Sciatic nerve (tissue), 2 donors: ENCODE measurements at regions of chr7 and their contacts with region 1.

Region 1: GRCh38 chr7:135170274-135170997 is at the start of gene CYREN:
- DNase-seq: peak; percentile 97
- ATAC-seq: peak; percentile 98
- total RNA-seq, gene CYREN: 39.8 TPM

Region 2: GRCh38 chr7:134992626-134993179 is 177.7 kb before region 1 on chr7:
- intact Hi-C with region 1: loop called (anchors 10 kb)
- DNase-seq: no peak
- ATAC-seq: peak; percentile 49

Region 3: GRCh38 chr7:135193615-135194081 is 23.2 kb after region 1 on chr7:
- intact Hi-C with region 1: no loop called
- DNase-seq: no peak
- ATAC-seq: peak; percentile 61